Esophagus muscularis mucosa (tissue), 4 donors: ENCODE measurements at regions of chr12 and their contacts with region 1.

Region 1: DNA sequence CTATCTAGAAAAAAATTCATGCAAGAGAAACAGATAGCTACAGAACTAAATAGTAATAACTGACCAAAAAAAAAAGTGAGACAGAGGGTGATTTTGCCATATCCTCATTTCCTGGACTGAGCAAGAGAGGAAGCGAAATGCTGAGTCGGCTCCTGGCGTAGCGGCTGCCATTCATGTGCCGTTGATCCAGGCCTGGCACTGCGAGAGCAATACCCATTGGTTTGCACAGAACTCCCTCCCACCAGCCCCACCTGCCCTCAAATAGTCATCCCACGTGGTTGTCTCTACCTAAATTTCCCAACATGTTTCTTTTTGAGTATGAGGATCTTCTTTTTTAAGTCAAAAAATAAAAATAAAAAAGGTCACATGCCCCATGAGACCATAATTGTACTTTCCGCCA is 9.4 kb upstream of the WNT5B start:
- DNase-seq: no peak
- H3K4me3 ChIP-seq: no peak overlapping the region
- H3K27ac ChIP-seq: no peak overlapping the region
- H3K4me1 ChIP-seq: peaks cover 0 to 4% (median under 1%) of the 10 kb centered on the region in 4 donors
- H3K27me3 ChIP-seq: no peaks in the 10 kb centered on the region
- CTCF ChIP-seq: no peak
- EP300 ChIP-seq: no peak
- POLR2A ChIP-seq: no peak

Region 2: GRCh38 chr12:1500095-1500801 is 119.3 kb before region 1 on chr12:
- intact Hi-C with region 1: no loop called
- DNase-seq: no peak
- H3K4me3 ChIP-seq: no peak overlapping the region
- H3K27ac ChIP-seq: no peak overlapping the region
- H3K4me1 ChIP-seq: peaks cover 0 to 45% (median 40%) of the 10 kb centered on the region in 4 donors
- H3K27me3 ChIP-seq: no peaks in the 10 kb centered on the region
- CTCF ChIP-seq: no peak
- EP300 ChIP-seq: no peak
- POLR2A ChIP-seq: no peak

Region 3: GRCh38 chr12:1680804-1681492 is 61.4 kb after region 1 on chr12:
- intact Hi-C with region 1: loop called (anchors 5 kb)
- DNase-seq: no peak
- H3K4me3 ChIP-seq: no peak overlapping the region
- H3K27ac ChIP-seq: peak overlapping the region in 3 of 4 donors; percentile 35 to 58 (median 47)
- H3K4me1 ChIP-seq: peaks cover 0 to 14% (median 0%) of the 10 kb centered on the region in 4 donors
- H3K27me3 ChIP-seq: no peaks in the 10 kb centered on the region
- CTCF ChIP-seq: no peak
- EP300 ChIP-seq: no peak
- POLR2A ChIP-seq: no peak

Region 4: DNA sequence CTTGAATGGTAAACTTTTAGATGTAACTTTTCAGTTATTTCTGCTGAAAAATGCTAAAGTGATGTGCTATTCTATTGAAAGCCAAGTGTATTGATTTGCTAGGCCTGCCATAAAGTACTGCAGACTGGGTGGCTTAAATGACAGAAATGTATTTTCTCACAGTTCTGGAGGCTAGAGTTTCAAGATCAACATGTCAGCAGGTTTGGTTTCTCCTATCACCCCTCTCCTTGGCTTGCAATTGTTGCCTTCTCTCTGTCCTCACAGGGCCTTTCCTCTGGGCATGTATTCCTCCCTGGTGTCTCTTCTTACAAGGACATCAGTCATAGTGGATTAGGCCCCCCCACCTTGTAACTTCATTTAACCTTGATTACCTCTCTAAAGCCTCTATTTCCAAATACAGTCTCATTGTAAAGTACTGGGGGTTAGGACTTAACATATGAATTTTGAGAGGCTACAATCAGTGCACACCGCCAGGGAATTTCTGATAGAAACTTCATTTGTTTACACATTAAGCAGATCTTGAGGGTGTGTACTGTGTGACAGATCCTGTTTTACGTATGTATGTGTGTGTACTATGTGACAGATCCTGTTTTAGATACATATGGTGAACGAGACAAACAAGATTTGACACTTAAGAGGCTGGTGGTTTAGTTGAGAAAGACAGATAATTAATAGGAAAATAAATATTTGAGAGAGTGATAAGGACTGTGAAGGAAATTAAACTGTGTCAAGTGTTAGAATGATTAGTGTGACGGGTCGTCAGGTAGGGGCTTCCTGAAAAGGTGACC is 120.8 kb after region 1 on chr12:
- intact Hi-C with region 1: no loop called
- DNase-seq: no peak
- H3K4me3 ChIP-seq: no peak overlapping the region
- H3K27ac ChIP-seq: no peak overlapping the region
- H3K4me1 ChIP-seq: peaks cover 33 to 43% (median 40%) of the 10 kb centered on the region in 4 donors
- H3K27me3 ChIP-seq: no peaks in the 10 kb centered on the region
- CTCF ChIP-seq: no peak
- EP300 ChIP-seq: no peak
- POLR2A ChIP-seq: no peak

Region 5: GRCh38 chr12:1907652-1908611 is 288.3 kb after region 1 on chr12:
- intact Hi-C with region 1: no loop called
- DNase-seq: peak; percentile 78
- H3K4me3 ChIP-seq: peak overlapping the region in 2 of 4 donors; percentile 14 to 16
- H3K27ac ChIP-seq: no peak overlapping the region
- H3K4me1 ChIP-seq: peaks cover 0 to 10% (median 6%) of the 10 kb centered on the region in 4 donors
- H3K27me3 ChIP-seq: peaks cover 0 to 28% (median 0%) of the 10 kb centered on the region in 4 donors
- CTCF ChIP-seq: no peak
- EP300 ChIP-seq: no peak
- POLR2A ChIP-seq: no peak